ENCODE measurements at regions of chr2 and their contacts with region 1.

Region 1: GRCh38 chr2:240622531-240623235 is 2.6 kb upstream of the GPR35 start:
- DNase-seq: peak in 3 of 5 donors; percentile 18 to 68 (median 44)
- H3K4me3 ChIP-seq: no peak overlapping the region
- H3K4me3 Mint-ChIP-seq: peak overlapping the region in 6 of 7 donors; percentile 54 to 81 (median 76)
- H3K27ac ChIP-seq: peak overlapping the region; percentile 10
- H3K27ac Mint-ChIP-seq: peak overlapping the region; percentile 87 to 99 (median 98)
- H3K4me1 ChIP-seq: peaks cover 72% of the 10 kb centered on the region
- H3K4me1 Mint-ChIP-seq: peaks cover 30 to 66% (median 47%) of the 10 kb centered on the region in 3 donors
- H3K27me3 ChIP-seq: no peaks in the 10 kb centered on the region
- H3K27me3 Mint-ChIP-seq: no peaks in the 10 kb centered on the region

Region 2: GRCh38 chr2:240586198-240586918 is 36.3 kb before region 1 on chr2 and contains the start of gene CAPN10:
- CTCF ChIA-PET with region 1: interaction called, 6 read pairs
- POLR2A ChIA-PET with region 1: interaction called, 22 read pairs
- DNase-seq: peak; percentile 95 to 97 (median 96)
- H3K4me3 ChIP-seq: peak within 1 kb of the TSS; percentile 97
- H3K4me3 Mint-ChIP-seq: peak within 1 kb of the TSS; percentile 94 to 98 (median 95)
- H3K27ac ChIP-seq: peak within 1 kb of the TSS; percentile 80
- H3K27ac Mint-ChIP-seq: peak within 1 kb of the TSS; percentile 92 to 99 (median 98)
- H3K4me1 ChIP-seq: peaks cover 35% of the 10 kb centered on the region
- H3K4me1 Mint-ChIP-seq: peaks cover 47 to 73% (median 55%) of the 10 kb centered on the region in 3 donors
- H3K27me3 ChIP-seq: no peaks in the 10 kb centered on the region
- H3K27me3 Mint-ChIP-seq: peaks cover 0 to 2% of the 10 kb centered on the region in 2 donors
- total RNA-seq, gene CAPN10: 36.1 to 40.5 TPM

Measured in CD8-positive, alpha-beta memory T cell (primary cell).